Colonic mucosa (tissue), 4 donors: ENCODE measurements at regions of chr1 and their contacts with region 1.

Region 1: GRCh38 chr1:203273206-203273868 is 32.0 kb upstream of the BTG2 start:
- DNase-seq: peak; percentile 93
- H3K4me3 ChIP-seq: peak overlapping the region; percentile 24
- H3K27ac ChIP-seq: peak overlapping the region; percentile 58
- H3K4me1 ChIP-seq: no peaks in the 10 kb centered on the region
- H3K27me3 ChIP-seq: no peaks in the 10 kb centered on the region
- CTCF ChIP-seq: peak; percentile 92

Region 2: DNA sequence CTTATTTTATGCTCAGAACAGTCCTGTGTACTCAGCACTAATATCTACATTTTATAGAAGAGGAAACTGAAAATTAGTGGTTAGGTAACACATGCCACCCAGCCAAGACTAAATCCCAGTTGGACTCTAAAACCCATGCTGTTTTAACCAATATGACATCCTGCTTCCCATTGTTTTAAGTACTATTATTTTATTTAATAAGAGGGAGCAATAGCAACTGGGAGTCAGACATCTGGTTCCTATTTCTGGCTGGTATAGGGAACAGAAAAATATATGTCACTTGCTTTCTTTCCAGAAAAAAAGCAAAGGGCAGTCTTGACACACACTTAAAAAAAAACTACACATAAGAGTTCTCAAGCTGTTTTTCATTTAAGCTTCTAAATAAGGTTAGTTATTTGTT is 358.2 kb before region 1 on chr1:
- intact Hi-C with region 1: no loop called
- DNase-seq: no peak
- H3K4me3 ChIP-seq: no peak overlapping the region
- H3K27ac ChIP-seq: no peak overlapping the region
- H3K4me1 ChIP-seq: no peaks in the 10 kb centered on the region
- H3K27me3 ChIP-seq: no peaks in the 10 kb centered on the region
- CTCF ChIP-seq: no peak

Region 3: DNA sequence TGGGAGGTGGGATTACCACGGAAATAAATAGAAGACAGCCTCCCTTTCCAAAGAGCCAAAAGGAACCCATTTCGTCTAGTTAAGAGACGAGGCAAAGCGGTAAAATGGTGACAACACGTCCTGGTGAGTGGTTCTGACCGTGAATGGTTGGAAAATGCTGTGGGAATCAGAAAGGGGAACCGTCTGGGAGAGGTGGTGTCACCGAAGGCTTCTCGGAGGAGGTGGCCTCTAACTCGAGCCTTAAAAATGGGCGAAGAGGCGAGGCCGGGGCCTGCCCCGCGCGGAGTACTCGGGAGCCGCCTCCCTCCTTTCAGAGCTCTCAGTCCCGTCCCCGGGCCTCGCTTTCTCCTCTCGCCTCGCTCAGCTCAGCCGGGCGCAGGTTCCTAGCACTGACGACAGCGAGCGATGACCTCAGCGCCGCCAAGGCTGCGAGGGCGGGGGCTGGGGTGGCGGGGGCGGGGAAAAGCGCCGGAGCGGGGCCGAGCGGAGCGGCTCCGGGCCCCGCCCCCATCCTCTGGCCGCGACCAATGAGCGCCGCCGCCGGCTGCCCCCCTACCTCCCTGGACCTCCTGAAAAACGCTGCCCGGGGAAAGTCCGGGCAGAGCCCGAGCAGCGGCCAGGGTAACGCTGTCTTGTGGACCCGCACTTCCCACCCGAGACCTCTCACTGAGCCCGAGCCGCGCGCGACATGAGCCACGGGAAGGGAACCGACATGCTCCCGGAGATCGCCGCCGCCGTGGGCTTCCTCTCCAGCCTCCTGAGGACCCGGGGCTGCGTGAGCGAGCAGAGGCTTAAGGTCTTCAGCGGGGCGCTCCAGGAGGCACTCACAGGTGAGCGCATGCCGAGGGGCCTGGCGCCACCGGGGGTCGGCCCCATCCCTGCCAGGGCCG is 31.8 kb after region 1 on chr1 and contains the start of gene BTG2:
- intact Hi-C with region 1: loop called (anchors 5 kb)
- DNase-seq: peak; percentile 95
- H3K4me3 ChIP-seq: peak within 1 kb of the TSS; percentile 85
- H3K27ac ChIP-seq: peak within 1 kb of the TSS; percentile 97
- H3K4me1 ChIP-seq: peaks cover 10% of the 10 kb centered on the region
- H3K27me3 ChIP-seq: no peaks in the 10 kb centered on the region
- CTCF ChIP-seq: no peak
- total RNA-seq, gene BTG2: 66.4 to 88.0 TPM

Region 4: GRCh38 chr1:203340112-203340804 is 66.9 kb after region 1 on chr1:
- intact Hi-C with region 1: loop called (anchors 2 kb)
- DNase-seq: peak; percentile 84
- H3K4me3 ChIP-seq: no peak overlapping the region
- H3K27ac ChIP-seq: no peak overlapping the region
- H3K4me1 ChIP-seq: no peaks in the 10 kb centered on the region
- H3K27me3 ChIP-seq: no peaks in the 10 kb centered on the region
- CTCF ChIP-seq: peak; percentile 83